ENCODE measurements at regions of chr1 and their contacts with region 1.

Region 1: GRCh38 chr1:10430216-10431069 is at the start of gene CENPS:
- DNase-seq: peak; percentile 88
- ATAC-seq: peak; percentile 87
- H3K4me3 ChIP-seq: peak within 1 kb of the TSS; percentile 85
- H3K27ac ChIP-seq: peak within 1 kb of the TSS; percentile 71
- H3K4me1 ChIP-seq: peaks cover 8% of the 10 kb centered on the region; the same call in 1 of the 2 replicates
- H3K27me3 ChIP-seq: no peaks in the 10 kb centered on the region
- CTCF ChIP-seq: peak; percentile 90
- total RNA-seq, gene CENPS: 16.3 and 19.5 TPM in 2 replicates

Region 2: GRCh38 chr1:9809100-9809510 is 621.3 kb before region 1 on chr1:
- CTCF ChIA-PET with region 1: no interaction called
- POLR2A ChIA-PET with region 1: no interaction called
- intact Hi-C with region 1: no loop called
- DNase-seq: peak; percentile 16
- ATAC-seq: no peak
- H3K4me3 ChIP-seq: no peak overlapping the region
- H3K27ac ChIP-seq: no peak overlapping the region
- H3K4me1 ChIP-seq: no peaks in the 10 kb centered on the region
- H3K27me3 ChIP-seq: no peaks in the 10 kb centered on the region
- CTCF ChIP-seq: no peak

Region 3: DNA sequence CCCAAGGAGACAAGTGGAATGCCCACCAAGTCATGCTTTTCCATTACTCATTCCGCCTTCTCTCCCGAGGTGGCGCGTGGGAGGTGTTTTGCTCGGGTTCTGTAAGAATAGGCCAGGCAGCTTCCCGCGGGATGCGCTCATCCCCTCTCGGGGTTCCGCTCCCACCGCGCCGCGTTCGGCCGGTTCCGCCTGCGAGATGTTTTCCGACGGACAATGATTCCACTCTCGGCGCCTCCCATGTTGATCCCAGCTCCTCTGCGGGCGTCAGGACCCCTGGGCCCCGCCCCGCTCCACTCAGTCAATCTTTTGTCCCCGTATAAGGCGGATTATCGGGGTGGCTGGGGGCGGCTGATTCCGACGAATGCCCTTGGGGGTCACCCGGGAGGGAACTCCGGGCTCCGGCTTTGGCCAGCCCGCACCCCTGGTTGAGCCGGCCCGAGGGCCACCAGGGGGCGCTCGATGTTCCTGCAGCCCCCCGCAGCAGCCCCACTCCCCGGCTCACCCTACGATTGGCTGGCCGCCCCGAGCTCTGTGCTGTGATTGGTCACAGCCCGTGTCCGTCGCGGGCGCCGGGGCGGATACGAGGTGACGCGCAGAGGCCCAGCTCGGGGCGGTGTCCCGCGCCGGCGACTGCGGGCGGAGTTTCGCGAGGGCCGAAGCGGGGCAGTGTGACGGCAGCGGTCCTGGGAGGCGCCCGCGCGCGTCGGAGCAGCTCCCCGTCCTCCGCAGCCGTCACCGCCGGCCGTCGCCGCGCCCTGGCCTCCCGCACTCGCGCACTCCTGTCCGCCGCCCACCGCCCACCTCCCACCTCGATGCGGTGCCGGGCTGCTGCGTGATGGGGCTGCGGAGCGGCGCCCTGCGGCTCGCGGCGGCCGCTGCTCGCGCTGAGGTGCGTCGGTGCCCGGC is 220.3 kb before region 1 on chr1 and contains the start of gene KIF1B:
- CTCF ChIA-PET with region 1: no interaction called
- POLR2A ChIA-PET with region 1: no interaction called
- intact Hi-C with region 1: loop called (anchors 1 kb)
- DNase-seq: peak; percentile 98
- ATAC-seq: peak; percentile 87
- H3K4me3 ChIP-seq: peak within 1 kb of the TSS; percentile 100
- H3K27ac ChIP-seq: peak within 1 kb of the TSS; percentile 80
- H3K4me1 ChIP-seq: peaks cover 18% of the 10 kb centered on the region
- H3K27me3 ChIP-seq: no peaks in the 10 kb centered on the region
- CTCF ChIP-seq: peak; percentile 93
- total RNA-seq, gene KIF1B: 21.4 and 24.2 TPM in 2 replicates

Region 4: GRCh38 chr1:10378081-10378841 is 52.2 kb before region 1 on chr1:
- CTCF ChIA-PET with region 1: interaction called, 3 read pairs
- POLR2A ChIA-PET with region 1: interaction called, 5 read pairs
- intact Hi-C with region 1: loop called (anchors 1 kb)
- DNase-seq: peak; percentile 80
- ATAC-seq: peak; percentile 38
- H3K4me3 ChIP-seq: no peak overlapping the region
- H3K27ac ChIP-seq: peak overlapping the region; percentile 60
- H3K4me1 ChIP-seq: peaks cover 35% of the 10 kb centered on the region
- H3K27me3 ChIP-seq: no peaks in the 10 kb centered on the region
- CTCF ChIP-seq: no peak

Region 5: DNA sequence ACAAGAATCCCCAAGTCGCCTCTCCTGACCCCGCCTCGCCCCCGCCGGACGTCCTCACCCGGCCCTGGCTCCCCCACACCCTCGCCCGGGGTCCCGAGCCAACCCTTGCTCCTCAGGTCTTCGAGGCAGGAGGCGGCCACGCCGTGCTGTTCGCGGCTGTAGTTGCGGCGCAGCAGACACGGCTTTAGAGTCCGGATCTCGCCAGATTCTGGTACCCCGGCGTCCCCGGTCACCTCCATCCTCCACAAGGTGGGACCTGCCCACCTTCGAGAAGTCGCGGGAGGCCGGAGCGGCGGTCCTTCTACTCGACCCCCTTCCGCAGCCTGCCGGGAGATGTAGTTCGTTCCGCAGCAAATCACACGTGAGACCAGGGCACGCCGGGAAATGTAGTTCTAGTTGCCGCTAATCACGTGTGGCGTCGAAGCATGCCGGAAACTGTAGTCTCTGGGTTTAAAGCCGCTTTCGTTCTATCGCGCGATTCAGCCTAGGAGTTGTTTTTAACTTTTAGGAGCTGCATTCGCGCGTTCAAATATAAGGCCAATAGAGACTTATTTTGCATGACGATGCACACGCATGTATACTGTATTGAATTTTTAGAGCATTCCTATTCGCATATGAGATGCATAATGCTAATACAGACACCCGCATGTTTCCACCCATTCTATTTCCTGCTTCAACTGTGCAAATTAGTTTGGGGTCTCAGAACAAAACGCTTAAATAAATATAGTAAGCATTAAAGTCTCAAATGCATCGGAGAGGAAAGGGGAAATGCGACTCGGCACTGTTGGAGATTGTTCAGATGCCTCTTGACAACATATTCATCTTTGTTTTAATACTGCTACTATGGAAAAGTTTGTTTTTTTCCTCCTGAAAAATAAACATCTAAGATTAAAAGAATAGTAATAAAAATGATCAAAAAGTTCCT is 42.0 kb after region 1 on chr1 and contains the start of gene DFFA:
- CTCF ChIA-PET with region 1: no interaction called
- POLR2A ChIA-PET with region 1: no interaction called
- intact Hi-C with region 1: loop called (anchors 1 kb)
- DNase-seq: peak; percentile 95
- ATAC-seq: peak; percentile 71
- H3K4me3 ChIP-seq: peak within 1 kb of the TSS; percentile 92
- H3K27ac ChIP-seq: peak within 1 kb of the TSS; percentile 7; the same call in 1 of the 2 replicates
- H3K4me1 ChIP-seq: peaks cover 24% of the 10 kb centered on the region
- H3K27me3 ChIP-seq: no peaks in the 10 kb centered on the region
- CTCF ChIP-seq: no peak
- total RNA-seq, gene DFFA: 46.7 and 52.0 TPM in 2 replicates

Region 6: GRCh38 chr1:10494754-10495474 is 64.5 kb after region 1 on chr1:
- CTCF ChIA-PET with region 1: no interaction called
- POLR2A ChIA-PET with region 1: no interaction called
- intact Hi-C with region 1: loop called (anchors 1 kb)
- DNase-seq: peak; percentile 75
- ATAC-seq: peak; percentile 96
- H3K4me3 ChIP-seq: no peak overlapping the region
- H3K27ac ChIP-seq: no peak overlapping the region
- H3K4me1 ChIP-seq: peaks cover 4% of the 10 kb centered on the region; the same call in 1 of the 2 replicates
- H3K27me3 ChIP-seq: no peaks in the 10 kb centered on the region
- CTCF ChIP-seq: peak; percentile 94